HEK293T (cell line): ENCODE measurements at regions of chr4 and their contacts with region 1.

Region 1: DNA sequence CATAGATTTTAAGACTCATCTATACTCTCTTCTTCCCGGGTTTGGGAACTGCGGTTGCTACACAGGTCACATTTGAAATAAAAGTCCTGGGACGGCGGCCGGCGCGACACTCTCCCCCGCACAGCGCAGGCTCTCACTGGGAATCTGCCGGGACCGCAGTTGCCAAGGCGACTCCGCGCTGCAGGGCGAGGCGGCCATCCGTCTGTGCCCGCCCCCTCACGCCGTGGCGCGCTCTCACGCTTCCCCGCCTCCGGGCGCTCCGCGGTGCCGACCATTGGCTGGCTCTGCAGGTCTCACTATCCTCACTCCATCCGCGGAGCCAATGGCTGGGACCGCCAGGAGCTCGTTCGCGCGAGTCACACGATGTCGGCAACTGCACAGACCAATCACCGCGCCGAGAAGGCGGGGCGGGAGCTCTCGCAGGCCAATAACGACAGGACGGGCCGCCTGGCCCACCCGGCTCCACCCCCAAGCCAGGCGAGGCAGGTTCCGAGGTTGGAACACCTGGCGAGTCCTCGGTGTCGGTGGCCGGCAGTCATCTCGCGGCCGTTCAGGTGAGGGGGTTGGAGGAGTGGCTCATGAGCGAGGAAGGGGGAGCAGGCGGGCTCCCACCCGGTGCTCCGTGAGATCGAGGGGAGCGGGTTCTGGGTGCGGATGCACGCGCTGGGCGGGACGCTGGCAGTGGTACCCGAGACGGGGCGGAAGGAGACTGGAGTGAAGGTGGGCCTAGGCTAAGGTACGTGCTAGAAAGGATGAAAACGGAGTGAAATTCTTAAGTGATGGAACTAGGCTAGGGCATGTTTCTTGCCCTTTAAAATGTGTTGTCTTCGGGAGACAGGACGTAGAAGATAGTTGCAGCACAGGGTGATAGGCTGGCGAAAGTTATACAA is at the start of gene MSMO1:
- DNase-seq: peak; percentile 94

Region 2: GRCh38 chr4:165208221-165208660 is 119.2 kb before region 1 on chr4:
- CTCF ChIA-PET with region 1: no interaction called
- POLR2A ChIA-PET with region 1: interaction called, 10 read pairs
- DNase-seq: no peak

Region 3: GRCh38 chr4:165312506-165312905 is 14.9 kb before region 1 on chr4:
- CTCF ChIA-PET with region 1: no interaction called
- POLR2A ChIA-PET with region 1: interaction called, 12 read pairs
- DNase-seq: no peak

Region 4: GRCh38 chr4:165343353-165344191 is 16.1 kb after region 1 on chr4:
- CTCF ChIA-PET with region 1: no interaction called
- POLR2A ChIA-PET with region 1: interaction called, 12 read pairs
- DNase-seq: no peak

Region 5: DNA sequence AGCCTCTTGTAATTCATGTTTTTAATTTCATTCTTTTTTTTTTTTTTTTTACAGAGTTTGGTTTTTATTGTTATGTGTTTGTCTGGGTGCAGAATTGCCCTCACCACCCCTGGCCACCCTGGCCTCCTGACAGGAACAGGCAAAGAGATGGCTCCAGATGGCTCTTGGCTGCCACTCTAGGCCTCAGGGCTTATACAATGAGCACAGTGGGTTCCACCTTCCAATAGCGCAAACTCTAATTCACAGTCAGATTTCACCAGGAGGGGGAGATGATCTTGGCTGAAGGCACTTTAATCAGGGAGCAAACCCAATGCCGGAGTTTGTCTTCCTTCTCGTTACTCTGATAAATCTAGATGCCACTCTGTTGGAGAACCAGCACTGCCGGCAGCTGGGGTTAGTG is 76.2 kb after region 1 on chr4:
- CTCF ChIA-PET with region 1: no interaction called
- POLR2A ChIA-PET with region 1: no interaction called
- DNase-seq: no peak

Region 6: DNA sequence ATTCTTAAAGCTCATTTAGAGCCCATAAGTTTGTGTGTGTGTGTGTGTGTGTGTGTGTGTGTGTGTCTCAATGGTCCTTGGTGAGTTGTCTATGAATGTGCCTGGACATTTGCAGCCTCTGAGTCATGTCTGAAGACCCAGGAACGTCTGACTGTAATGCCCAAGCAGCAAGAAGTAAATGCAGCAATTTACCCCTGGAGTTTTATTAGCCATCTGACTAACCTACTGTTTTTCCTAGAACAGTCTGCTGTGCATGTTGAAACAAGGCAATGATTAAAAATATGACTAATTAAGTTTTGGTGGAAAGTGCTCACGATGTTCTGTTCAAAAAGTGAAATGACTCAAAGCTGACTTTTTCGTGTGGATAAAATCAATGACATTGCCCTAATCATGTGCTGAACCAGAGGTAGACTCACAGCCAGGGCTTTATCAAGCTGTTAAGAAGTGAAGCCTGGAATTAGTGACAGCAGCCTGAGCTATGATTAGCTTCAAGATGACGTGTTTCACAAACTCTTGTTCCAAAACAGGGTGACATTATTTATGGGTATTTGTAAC is 253.0 kb after region 1 on chr4:
- CTCF ChIA-PET with region 1: no interaction called
- POLR2A ChIA-PET with region 1: no interaction called
- DNase-seq: peak; percentile 59